CD4-positive, alpha-beta memory T cell (primary cell): ENCODE measurements at regions of chr2 and their contacts with region 1.

Region 1: DNA sequence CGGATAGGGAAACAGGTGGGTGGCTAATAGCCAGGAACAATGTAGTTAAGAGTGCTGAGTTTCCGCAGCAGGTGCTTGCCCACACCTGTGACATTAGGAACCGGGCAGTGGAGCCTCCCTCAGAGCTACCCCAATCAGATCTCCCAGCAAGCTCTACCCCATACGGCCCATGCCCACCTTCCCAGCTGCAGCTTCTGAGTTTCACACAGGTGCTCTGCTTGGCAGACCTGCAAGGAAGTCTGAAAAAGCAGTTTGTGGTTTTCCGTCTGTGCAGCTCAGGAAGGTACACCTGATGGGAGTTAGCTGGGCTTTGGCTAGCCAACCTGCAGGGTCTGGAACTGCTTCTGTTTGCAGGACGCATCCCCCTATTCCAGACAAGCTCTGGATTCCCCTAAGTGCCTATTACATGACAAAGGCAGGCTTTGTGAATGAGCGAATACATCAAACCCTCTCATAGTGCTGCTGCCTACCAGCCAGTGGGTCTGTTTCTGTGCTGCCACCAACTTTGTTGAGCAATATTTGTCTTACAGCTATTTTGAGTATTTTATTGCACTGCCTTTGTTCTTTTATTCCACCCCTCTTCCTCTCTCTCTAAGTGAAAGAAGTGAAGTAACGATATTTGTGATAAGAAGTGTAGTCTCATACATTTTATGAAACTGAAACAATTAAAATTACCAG is 24.7 kb upstream of the CEP68 start:
- DNase-seq: peak in 1 of 5 donors; percentile 10
- H3K4me3 ChIP-seq: peak overlapping the region in 1 of 2 donors; percentile 13
- H3K4me3 Mint-ChIP-seq: peak overlapping the region; percentile 39 to 75 (median 65)
- H3K27ac ChIP-seq: peak overlapping the region; percentile 49
- H3K27ac Mint-ChIP-seq: peak overlapping the region; percentile 33 to 92 (median 73)
- H3K4me1 ChIP-seq: peaks cover 30% of the 10 kb centered on the region
- H3K4me1 Mint-ChIP-seq: peaks cover 23 to 26% (median 24%) of the 10 kb centered on the region in 4 donors
- H3K27me3 ChIP-seq: no peaks in the 10 kb centered on the region
- H3K27me3 Mint-ChIP-seq: no peaks in the 10 kb centered on the region

Region 2: GRCh38 chr2:64404002-64404731 is 627.3 kb before region 1 on chr2:
- CTCF ChIA-PET with region 1: no interaction called
- POLR2A ChIA-PET with region 1: no interaction called
- intact Hi-C with region 1: no loop called
- DNase-seq: no peak
- H3K4me3 ChIP-seq: no peak overlapping the region
- H3K4me3 Mint-ChIP-seq: no peak overlapping the region
- H3K27ac ChIP-seq: no peak overlapping the region
- H3K27ac Mint-ChIP-seq: no peak overlapping the region
- H3K4me1 ChIP-seq: no peaks in the 10 kb centered on the region
- H3K4me1 Mint-ChIP-seq: no peaks in the 10 kb centered on the region
- H3K27me3 ChIP-seq: no peaks in the 10 kb centered on the region
- H3K27me3 Mint-ChIP-seq: peaks cover 2% of the 10 kb centered on the region in 2 donors

Region 3: GRCh38 chr2:64952511-64953482 is 78.7 kb before region 1 on chr2:
- CTCF ChIA-PET with region 1: no interaction called
- POLR2A ChIA-PET with region 1: no interaction called
- intact Hi-C with region 1: no loop called
- DNase-seq: no peak
- H3K4me3 ChIP-seq: no peak overlapping the region
- H3K4me3 Mint-ChIP-seq: no peak overlapping the region
- H3K27ac ChIP-seq: no peak overlapping the region
- H3K27ac Mint-ChIP-seq: no peak overlapping the region
- H3K4me1 ChIP-seq: peaks cover 2% of the 10 kb centered on the region
- H3K4me1 Mint-ChIP-seq: peaks cover 0 to 5% (median 2%) of the 10 kb centered on the region in 4 donors
- H3K27me3 ChIP-seq: no peaks in the 10 kb centered on the region
- H3K27me3 Mint-ChIP-seq: no peaks in the 10 kb centered on the region

Region 4: DNA sequence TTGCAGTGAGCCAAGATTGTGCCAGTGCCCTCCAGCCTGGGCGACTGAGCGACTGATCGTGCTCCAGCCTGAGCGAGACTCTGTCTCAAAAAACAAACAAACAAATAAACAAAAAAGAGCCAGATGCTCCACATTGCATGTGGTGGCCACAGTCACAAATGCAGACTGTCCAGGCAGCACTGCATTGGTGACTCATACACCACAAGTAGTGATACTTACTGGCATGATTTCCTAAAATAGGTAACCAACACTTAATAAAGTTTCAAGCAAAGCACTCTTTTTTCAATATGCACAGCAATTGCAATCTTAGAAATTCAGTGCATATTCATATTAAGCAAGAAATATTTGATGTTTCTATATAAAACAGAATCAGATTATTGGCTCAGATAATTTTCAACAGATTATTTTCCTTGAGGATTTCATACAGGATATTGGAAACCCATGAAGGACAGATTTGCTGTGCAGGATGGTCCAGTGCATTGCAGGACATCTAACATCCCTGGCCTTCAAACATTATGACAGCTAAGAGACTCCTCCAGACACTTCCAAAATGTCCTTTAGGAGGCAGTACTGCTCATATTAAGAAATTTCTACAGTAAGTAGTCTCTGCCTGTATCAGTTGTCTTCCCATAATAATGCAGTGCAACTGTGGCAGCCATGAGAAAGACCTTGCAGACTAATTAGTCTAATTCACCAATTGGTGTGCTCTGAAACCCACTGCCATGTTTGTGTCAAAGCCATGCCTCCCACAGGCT is 52.8 kb before region 1 on chr2:
- CTCF ChIA-PET with region 1: interaction called, 11 read pairs
- POLR2A ChIA-PET with region 1: interaction called, 3 read pairs
- intact Hi-C with region 1: no loop called
- DNase-seq: peak in 4 of 5 donors; percentile 12 to 19 (median 17)
- H3K4me3 ChIP-seq: no peak overlapping the region
- H3K4me3 Mint-ChIP-seq: no peak overlapping the region
- H3K27ac ChIP-seq: no peak overlapping the region
- H3K27ac Mint-ChIP-seq: no peak overlapping the region
- H3K4me1 ChIP-seq: no peaks in the 10 kb centered on the region
- H3K4me1 Mint-ChIP-seq: no peaks in the 10 kb centered on the region
- H3K27me3 ChIP-seq: no peaks in the 10 kb centered on the region
- H3K27me3 Mint-ChIP-seq: no peaks in the 10 kb centered on the region

Region 5: DNA sequence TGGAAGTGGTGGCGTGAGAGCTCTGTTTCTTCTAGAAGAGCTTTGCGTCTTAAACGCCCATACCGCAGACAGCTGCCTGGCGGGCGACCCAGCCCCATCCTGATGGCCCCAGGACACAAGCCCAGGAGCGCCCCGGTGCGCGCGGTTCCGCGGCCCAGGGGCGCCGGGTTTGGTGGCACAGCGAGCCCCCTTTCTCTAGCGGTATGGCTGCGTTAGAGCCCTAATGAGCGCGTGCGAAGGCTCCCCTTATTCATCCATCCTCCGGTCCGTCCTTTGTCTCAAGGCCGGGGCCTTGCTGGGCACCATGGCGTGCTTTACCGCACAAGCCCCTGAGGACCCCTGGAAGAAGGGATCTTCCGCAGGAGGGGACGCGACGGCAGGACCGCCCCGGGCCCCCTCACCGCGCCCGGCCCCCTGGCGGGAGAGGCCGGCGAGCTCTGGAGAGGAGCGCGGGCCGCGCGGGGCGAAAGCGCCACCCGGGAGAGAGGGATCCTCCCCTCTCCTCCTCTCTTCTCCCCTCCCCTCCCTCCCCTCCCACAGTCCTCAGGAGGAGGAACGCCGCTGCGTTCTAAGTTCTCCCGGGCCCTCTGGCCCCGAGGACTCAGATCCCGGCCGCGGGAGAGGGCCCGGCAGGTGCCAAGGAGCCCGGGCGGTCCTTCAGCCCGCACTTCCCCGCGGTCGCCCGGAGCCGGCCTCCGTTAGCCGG is 42.9 kb before region 1 on chr2:
- CTCF ChIA-PET with region 1: no interaction called
- POLR2A ChIA-PET with region 1: interaction called, 11 read pairs
- intact Hi-C with region 1: loop called (anchors 2 kb)
- DNase-seq: peak in 4 of 5 donors; percentile 53 to 76 (median 60)
- H3K4me3 ChIP-seq: peak overlapping the region; percentile 52 to 56
- H3K4me3 Mint-ChIP-seq: peak overlapping the region; percentile 84 to 91 (median 89)
- H3K27ac ChIP-seq: peak overlapping the region; percentile 48
- H3K27ac Mint-ChIP-seq: peak overlapping the region; percentile 38 to 93 (median 71)
- H3K4me1 ChIP-seq: peaks cover 32% of the 10 kb centered on the region
- H3K4me1 Mint-ChIP-seq: peaks cover 16 to 44% (median 33%) of the 10 kb centered on the region in 4 donors
- H3K27me3 ChIP-seq: no peaks in the 10 kb centered on the region
- H3K27me3 Mint-ChIP-seq: no peaks in the 10 kb centered on the region

Region 6: GRCh38 chr2:65064728-65065552 is 33.5 kb after region 1 on chr2:
- CTCF ChIA-PET with region 1: no interaction called
- POLR2A ChIA-PET with region 1: no interaction called
- intact Hi-C with region 1: no loop called
- DNase-seq: peak; percentile 55 to 63 (median 57)
- H3K4me3 ChIP-seq: no peak overlapping the region
- H3K4me3 Mint-ChIP-seq: peak overlapping the region in 3 of 8 donors; percentile 29 to 35 (median 31)
- H3K27ac ChIP-seq: no peak overlapping the region
- H3K27ac Mint-ChIP-seq: peak overlapping the region in 6 of 7 donors; percentile 2 to 66 (median 22)
- H3K4me1 ChIP-seq: peaks cover 44% of the 10 kb centered on the region
- H3K4me1 Mint-ChIP-seq: peaks cover 20 to 76% (median 38%) of the 10 kb centered on the region in 4 donors
- H3K27me3 ChIP-seq: no peaks in the 10 kb centered on the region
- H3K27me3 Mint-ChIP-seq: no peaks in the 10 kb centered on the region